Right cardiac atrium (tissue), 5 donors: ENCODE measurements at regions of chr7 and their contacts with region 1.

Region 1: GRCh38 chr7:139960157-139960556 is 102.6 kb downstream of the PARP12 start:
- DNase-seq: no peak
- ATAC-seq: no peak
- H3K4me3 ChIP-seq: no peak overlapping the region
- H3K27ac ChIP-seq: no peak overlapping the region
- H3K4me1 ChIP-seq: no peaks in the 10 kb centered on the region
- H3K27me3 ChIP-seq: no peaks in the 10 kb centered on the region

Region 2: GRCh38 chr7:139811066-139811465 is 149.1 kb before region 1 on chr7:
- intact Hi-C with region 1: no loop called
- DNase-seq: no peak
- ATAC-seq: no peak
- H3K4me3 ChIP-seq: no peak overlapping the region
- H3K27ac ChIP-seq: no peak overlapping the region
- H3K4me1 ChIP-seq: no peaks in the 10 kb centered on the region
- H3K27me3 ChIP-seq: no peaks in the 10 kb centered on the region

Region 3: DNA sequence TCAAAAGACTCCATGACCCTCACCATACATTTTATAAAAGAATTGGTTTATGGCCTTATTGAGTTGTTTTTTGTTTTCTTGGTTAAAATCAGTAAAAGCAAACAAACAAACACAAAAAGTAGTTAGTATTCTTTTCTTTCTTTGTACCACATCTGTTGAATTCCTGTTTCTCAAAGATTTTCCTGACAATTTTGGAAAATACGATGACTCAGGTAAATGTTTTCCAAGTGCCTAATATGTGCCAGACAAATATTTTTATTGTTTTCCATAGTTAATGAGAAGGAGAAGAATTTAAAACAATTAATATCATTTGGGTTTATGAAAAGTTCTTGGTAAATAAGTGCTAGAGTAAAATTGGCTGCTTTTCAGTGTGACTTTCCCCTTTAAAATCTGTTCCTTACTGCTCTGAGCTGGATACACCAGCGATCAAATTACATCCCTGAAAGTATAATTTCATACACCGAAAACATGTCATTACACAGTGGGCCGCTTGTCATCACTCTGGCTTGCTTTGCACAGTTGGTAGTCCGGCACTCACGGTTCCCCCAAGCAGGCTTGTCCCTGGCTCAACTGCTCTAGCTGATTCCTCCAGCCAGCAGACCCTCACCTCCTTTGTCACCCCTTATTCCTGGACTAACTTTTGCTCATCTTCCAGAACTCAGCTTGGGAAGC is 50.6 kb before region 1 on chr7:
- intact Hi-C with region 1: loop called in 1 of 4 experiments (anchors 10 kb)
- DNase-seq: peak in 1 of 3 donors; percentile 68
- ATAC-seq: peak; percentile 42 to 78
- H3K4me3 ChIP-seq: no peak overlapping the region
- H3K27ac ChIP-seq: peak overlapping the region; percentile 34
- H3K4me1 ChIP-seq: peaks cover 7% of the 10 kb centered on the region
- H3K27me3 ChIP-seq: no peaks in the 10 kb centered on the region